ENCODE measurements at regions of chr10 and their contacts with region 1.

Region 1: DNA sequence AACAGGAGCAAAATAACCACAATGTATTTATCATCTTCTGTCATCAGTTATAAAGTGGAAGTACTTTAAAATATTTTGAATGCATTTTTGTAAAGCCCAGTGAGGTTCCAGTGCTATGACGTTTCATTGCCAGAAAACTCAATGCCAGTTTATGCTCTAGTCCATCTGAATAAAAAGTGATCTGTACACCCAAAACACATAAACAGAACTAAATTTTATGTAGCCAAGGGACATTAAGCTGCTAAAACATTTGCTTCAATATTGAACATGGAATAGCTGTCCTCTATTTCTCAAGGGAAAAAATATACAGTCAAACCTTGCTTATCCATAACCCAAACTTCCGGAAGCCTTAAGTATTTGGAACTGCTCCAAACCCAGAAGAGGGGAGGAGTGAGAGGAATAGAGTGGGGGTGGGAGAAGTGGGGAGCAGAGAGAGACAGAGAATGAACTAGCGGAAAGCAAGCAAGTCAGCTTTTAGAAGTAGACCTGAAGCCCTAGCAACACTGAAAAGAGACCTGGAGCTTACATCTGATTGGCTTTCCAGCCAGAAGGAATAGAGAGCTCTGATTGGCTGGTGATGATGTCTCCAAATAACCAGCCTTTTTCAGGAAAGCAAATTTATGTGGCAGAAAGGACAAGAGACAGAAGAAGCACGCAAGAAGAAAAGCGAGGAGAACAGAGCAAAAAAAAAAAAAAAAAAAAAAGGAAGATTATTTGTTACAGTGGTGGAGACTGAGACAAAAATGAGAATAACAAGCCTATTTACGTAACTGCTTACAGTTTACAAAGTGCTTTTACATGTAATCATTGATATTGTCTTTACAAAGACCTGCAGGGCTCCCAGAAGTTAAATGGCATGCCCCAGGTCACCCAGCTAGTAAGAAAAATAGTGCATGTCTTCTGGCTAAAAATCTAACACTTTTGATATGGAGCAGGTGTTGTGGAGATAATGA is 196.0 kb downstream of the RNLS start:
- DNase-seq: no peak
- ATAC-seq: peak; percentile 34
- H3K4me3 Mint-ChIP-seq: no peak overlapping the region
- H3K27ac Mint-ChIP-seq: no peak overlapping the region
- H3K4me1 Mint-ChIP-seq: peaks cover 29% of the 10 kb centered on the region
- H3K27me3 Mint-ChIP-seq: no peaks in the 10 kb centered on the region
- CTCF ChIP-seq: no peak

Region 2: DNA sequence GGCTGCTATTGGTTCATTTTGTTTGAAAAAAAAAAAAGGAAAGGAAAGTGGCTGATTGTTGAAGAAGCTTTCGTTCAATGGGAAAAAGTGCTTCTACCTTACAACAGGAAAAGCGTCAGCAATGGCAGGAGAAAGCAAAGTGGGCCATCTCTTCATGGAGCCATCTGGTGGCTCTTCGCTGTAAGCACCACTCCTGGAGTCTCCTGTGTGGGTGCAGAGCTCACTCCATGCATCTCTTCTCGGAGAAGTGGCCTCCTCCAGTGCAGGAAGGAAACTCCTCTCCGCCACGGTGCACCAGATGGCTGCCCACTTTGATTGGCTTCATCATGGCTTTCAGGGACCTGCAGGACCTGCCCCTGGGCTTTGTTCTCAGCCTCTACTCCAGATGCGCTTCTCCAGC is 272.7 kb before region 1 on chr10:
- CTCF ChIA-PET with region 1: interaction called, 4 read pairs
- POLR2A ChIA-PET with region 1: no interaction called
- intact Hi-C with region 1: loop called (anchors 10 kb)
- DNase-seq: peak; percentile 25
- ATAC-seq: no peak
- H3K4me3 Mint-ChIP-seq: no peak overlapping the region
- H3K27ac Mint-ChIP-seq: no peak overlapping the region
- H3K4me1 Mint-ChIP-seq: peaks cover 16% of the 10 kb centered on the region
- H3K27me3 Mint-ChIP-seq: peaks cover 4% of the 10 kb centered on the region
- CTCF ChIP-seq: peak; percentile 68

Region 3: DNA sequence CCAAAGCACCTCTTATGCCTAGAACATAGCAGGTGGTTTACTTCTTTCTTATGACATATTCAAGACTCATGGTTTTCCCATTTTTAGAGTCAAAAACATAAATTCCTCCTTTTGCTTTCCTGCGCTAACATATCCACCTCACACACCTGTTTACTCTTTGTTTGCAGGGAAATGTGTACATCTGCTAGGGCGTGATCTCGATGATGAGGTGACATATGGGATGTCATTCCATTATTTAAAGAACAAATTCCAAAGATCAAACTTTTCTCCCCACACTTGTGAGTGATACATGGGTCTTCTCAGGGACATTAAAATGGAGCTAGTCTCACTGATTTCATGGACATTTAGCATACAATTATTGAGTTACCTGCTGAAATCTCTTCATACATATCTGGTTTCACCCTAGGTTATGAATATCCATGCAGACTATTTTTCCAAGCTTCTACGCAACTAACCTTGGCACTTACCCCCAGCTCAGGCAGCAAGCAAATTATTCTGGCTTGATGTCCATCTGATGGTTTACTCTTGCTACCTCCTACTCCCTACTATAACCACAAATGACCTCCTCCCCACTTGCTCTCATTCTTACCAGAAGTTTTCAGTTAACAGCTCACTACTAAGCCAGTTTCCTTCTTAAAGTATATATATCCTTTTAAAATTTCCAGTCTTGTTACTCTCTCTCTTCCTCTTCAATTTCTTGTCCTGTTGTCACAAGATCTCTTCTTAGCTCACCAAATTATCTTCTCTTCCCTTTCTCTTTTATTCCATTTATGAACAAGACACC is 12.5 kb before region 1 on chr10:
- CTCF ChIA-PET with region 1: interaction called, 28 read pairs
- POLR2A ChIA-PET with region 1: no interaction called
- intact Hi-C with region 1: no loop called
- DNase-seq: no peak
- ATAC-seq: no peak
- H3K4me3 Mint-ChIP-seq: no peak overlapping the region
- H3K27ac Mint-ChIP-seq: no peak overlapping the region
- H3K4me1 Mint-ChIP-seq: peaks cover 5% of the 10 kb centered on the region
- H3K27me3 Mint-ChIP-seq: no peaks in the 10 kb centered on the region
- CTCF ChIP-seq: no peak

Region 4: DNA sequence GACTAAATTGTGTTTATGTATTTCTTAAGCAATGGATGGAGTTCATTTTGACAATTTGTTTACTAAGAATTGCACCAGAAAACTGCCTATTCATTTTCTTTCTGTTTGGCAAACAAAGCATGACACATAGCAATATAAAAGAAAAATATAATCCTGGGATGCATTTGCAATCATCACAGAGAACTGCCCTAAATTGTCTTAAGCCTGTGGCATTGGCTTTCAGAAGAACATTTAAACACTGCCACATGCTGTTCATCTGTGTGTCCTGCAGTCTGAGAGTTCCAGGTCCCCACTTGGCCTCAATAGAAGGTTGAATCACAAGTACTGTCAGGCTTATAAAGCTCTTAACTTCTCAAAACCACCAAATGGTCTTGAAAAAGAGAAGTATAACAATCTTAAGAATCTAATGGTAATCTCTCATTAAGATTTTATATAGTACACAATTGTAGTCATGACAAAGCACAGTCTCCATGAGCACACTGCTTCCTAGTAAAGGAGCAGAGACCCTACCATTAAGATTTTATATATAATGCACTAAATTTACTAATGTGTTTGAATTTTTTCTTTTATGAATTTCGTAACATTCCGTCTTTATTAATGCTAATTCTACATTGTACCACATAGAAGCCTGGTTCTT is 166.1 kb after region 1 on chr10:
- CTCF ChIA-PET with region 1: interaction called, 5 read pairs
- POLR2A ChIA-PET with region 1: no interaction called
- intact Hi-C with region 1: loop called (anchors 10 kb)
- DNase-seq: peak; percentile 58
- ATAC-seq: peak; percentile 93
- H3K4me3 Mint-ChIP-seq: no peak overlapping the region
- H3K27ac Mint-ChIP-seq: no peak overlapping the region
- H3K4me1 Mint-ChIP-seq: peaks cover 4% of the 10 kb centered on the region
- H3K27me3 Mint-ChIP-seq: no peaks in the 10 kb centered on the region
- CTCF ChIP-seq: peak; percentile 54

Region 5: DNA sequence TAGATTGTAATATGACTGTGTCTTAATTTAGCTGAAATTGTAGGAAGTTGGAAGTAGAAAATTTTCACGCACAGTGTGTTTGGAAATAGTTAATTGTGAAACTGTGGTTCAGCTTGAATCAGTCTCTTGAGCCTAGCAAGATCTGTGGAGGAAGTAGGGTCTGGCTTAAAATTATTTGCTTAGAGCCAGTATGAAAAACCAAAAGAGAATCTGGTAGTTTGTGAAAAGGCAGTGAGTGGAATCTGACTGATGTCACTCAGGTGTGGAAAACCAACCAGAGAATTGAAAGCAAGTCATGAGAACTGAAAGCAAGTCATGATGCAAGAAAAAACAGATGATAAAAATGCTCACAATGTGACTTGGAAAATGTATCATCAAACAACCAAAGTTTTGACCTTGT is 211.0 kb after region 1 on chr10:
- CTCF ChIA-PET with region 1: no interaction called
- POLR2A ChIA-PET with region 1: no interaction called
- intact Hi-C with region 1: no loop called
- DNase-seq: no peak
- ATAC-seq: peak; percentile 55
- H3K4me3 Mint-ChIP-seq: no peak overlapping the region
- H3K27ac Mint-ChIP-seq: no peak overlapping the region
- H3K4me1 Mint-ChIP-seq: peaks cover 9% of the 10 kb centered on the region
- H3K27me3 Mint-ChIP-seq: peaks cover 3% of the 10 kb centered on the region
- CTCF ChIP-seq: no peak

Measured in activated CD8-positive, alpha-beta T cell treated with anti-CD3 and anti-CD28 coated beads for 36 hours (primary cell).